Activated CD4-positive, alpha-beta T cell treated with anti-CD3 and anti-CD28 coated beads, Interleukin-2, amount 10 ng/mL, durations not matched to agents 24 days and 14 days (primary cell): ENCODE measurements at regions of chr15 and their contacts with region 1.

Region 1: GRCh38 chr15:55279746-55280351 is 9.8 kb downstream of the RAB27A start:
- DNase-seq: peak; percentile 85
- H3K4me3 Mint-ChIP-seq: peak overlapping the region; percentile 75
- H3K27ac Mint-ChIP-seq: peak overlapping the region; percentile 95
- H3K4me1 Mint-ChIP-seq: peaks cover 79% of the 10 kb centered on the region
- H3K27me3 Mint-ChIP-seq: no peaks in the 10 kb centered on the region

Region 2: DNA sequence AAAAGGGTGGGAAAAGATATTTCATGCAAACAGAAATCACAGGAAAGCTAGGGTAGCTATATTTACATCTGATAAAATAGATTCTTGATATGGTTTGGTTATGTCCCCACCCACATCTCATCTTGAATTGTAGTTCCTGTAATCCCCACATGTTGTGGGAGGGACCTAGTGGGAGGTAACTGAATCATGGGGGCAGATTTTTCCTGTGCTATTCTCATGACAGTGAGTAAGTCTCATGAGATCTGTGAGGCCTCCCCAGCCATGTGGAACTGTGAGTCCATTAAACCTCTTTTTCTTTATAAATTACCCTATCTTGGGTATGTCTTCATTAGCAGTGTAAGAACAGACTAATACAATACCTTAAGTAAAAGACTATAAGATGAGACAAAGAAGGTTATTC is 641.2 kb before region 1 on chr15:
- intact Hi-C with region 1: no loop called
- DNase-seq: no peak
- H3K4me3 Mint-ChIP-seq: no peak overlapping the region
- H3K27ac Mint-ChIP-seq: no peak overlapping the region
- H3K4me1 Mint-ChIP-seq: no peaks in the 10 kb centered on the region
- H3K27me3 Mint-ChIP-seq: no peaks in the 10 kb centered on the region

Region 3: GRCh38 chr15:55241891-55242290 is 38.0 kb before region 1 on chr15:
- intact Hi-C with region 1: loop called (anchors 1 kb)
- DNase-seq: no peak
- H3K4me3 Mint-ChIP-seq: peak overlapping the region; percentile 4
- H3K27ac Mint-ChIP-seq: peak overlapping the region; percentile 39
- H3K4me1 Mint-ChIP-seq: peaks cover 57% of the 10 kb centered on the region
- H3K27me3 Mint-ChIP-seq: no peaks in the 10 kb centered on the region

Region 4: DNA sequence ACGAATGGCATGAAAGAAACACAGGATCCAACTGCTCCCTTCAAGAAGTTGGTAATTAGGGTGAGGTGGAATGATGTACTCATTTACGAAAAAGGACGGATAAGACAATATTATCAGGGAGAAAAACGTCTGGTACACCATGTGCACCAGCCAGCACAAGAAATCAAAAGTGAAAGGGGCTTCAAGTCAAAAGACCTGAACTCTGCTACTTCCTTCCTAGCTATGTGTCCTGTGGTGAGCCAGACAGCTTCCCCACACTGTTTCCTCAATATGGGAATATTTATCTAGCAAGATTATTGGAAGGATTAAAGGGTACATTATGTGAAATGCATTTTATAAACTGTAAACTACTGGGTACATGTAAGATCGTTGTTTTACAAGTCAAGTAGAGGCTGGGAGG is 24.1 kb before region 1 on chr15:
- intact Hi-C with region 1: loop called (anchors 1 kb)
- DNase-seq: peak; percentile 75
- H3K4me3 Mint-ChIP-seq: peak overlapping the region; percentile 76
- H3K27ac Mint-ChIP-seq: peak overlapping the region; percentile 71
- H3K4me1 Mint-ChIP-seq: peaks cover 68% of the 10 kb centered on the region
- H3K27me3 Mint-ChIP-seq: no peaks in the 10 kb centered on the region

Region 5: GRCh38 chr15:55267401-55268175 is 12.3 kb before region 1 on chr15:
- intact Hi-C with region 1: loop called (anchors 1 kb)
- DNase-seq: peak; percentile 89
- H3K4me3 Mint-ChIP-seq: peak overlapping the region; percentile 81
- H3K27ac Mint-ChIP-seq: peak overlapping the region; percentile 97
- H3K4me1 Mint-ChIP-seq: peaks cover 54% of the 10 kb centered on the region
- H3K27me3 Mint-ChIP-seq: no peaks in the 10 kb centered on the region

Region 6: DNA sequence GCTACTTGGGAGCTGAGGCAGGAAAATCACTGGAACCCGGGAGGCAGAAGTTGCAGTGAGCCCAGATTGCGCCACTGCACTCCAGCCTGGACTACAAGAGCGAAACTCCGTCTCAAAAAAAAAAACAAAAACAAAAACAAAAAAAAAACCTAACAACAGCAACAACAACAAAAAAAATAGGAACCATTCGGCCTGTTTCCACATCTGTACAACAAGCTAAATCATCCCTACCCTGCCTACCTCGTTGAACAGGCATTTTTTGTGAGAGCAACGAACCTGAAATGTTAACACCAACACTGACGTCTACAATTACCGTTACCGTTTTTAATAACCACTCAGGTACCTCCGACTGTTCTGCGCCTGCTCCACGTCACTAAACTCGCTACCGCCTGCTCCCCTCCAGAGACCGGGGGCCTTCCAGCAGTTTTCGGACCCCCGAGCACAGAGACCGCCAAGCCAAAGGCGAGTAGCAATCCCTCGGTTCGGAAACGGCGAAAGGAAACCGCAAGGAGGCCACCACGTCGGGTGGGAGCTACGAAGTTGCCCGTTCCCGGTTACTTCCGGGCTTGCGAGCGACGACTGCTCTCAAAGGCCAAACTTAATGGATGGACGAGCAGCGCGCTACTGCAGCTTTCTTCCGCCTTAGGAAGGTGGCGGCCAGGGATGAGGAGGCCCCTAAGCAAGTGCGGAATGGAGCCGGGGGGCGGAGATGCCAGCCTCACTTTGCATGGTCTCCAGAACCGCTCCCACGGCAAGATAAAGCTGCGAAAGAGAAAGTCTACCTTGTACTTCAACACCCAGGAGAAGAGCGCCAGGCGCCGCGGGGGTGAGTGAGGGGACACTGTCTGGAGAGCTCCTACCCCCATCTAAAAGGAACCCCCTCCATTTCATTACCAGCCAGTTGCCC is 39.0 kb after region 1 on chr15 and contains the starts of genes PIGB and PIGBOS1:
- intact Hi-C with region 1: loop called (anchors 5 kb)
- DNase-seq: peak; percentile 95
- H3K4me3 Mint-ChIP-seq: peak within 1 kb of the TSS; percentile 97
- H3K27ac Mint-ChIP-seq: peak within 1 kb of the TSS; percentile 99
- H3K4me1 Mint-ChIP-seq: peaks cover 39% of the 10 kb centered on the region
- H3K27me3 Mint-ChIP-seq: no peaks in the 10 kb centered on the region
- total RNA-seq, gene PIGB: 13.3 and 18.6 TPM in 2 replicates
- total RNA-seq, gene PIGBOS1: 9.7 and 10.3 TPM in 2 replicates